H1 (cell line): ENCODE measurements at regions of chr1 and their contacts with region 1.

Region 1: DNA sequence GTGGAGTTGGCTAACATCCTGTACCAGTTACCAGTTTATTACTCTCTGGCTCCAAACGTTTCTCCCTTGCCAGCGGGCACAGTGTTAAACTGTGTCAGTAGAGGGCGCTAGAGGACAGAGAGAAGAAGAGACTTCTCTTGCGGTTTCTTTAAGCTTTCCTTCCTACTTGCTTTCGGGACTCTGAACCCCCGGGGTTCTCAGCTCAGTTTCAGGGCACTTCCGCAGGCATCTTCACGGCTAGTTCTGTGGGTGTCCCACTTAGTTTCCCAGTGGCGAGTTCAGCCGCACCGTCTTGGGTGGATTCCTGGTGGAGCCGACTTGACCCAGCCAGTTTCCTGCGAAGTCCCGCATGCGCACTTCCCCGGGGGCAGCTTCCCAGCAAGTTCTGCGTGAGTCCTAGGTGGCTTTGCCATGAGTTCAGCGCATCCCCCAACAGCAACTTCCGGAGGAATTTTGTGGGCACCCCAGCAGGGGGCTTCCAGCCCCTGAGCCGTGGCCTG is 37.9 kb upstream of the BTG2 start:
- DNase-seq: peak; percentile 50 to 89
- H3K4me3 ChIP-seq: peak overlapping the region; percentile 50 to 70 (median 56)
- H3K27ac ChIP-seq: no peak overlapping the region
- H3K4me1 ChIP-seq: peaks cover 0 to 3% (median 1%) of the 10 kb centered on the region in 4 experiments; a peak in 2 of 7 replicates
- H3K27me3 ChIP-seq: peaks cover 0 to 4% (median 2%) of the 10 kb centered on the region in 4 experiments; a peak in 4 of 7 replicates
- CTCF ChIP-seq: peak; percentile 42 to 90 (median 87)
- EP300 ChIP-seq: no peak
- POLR2A ChIP-seq: no peak
- RAD21 ChIP-seq: peak; percentile 75 to 85

Region 2: GRCh38 chr1:203038891-203039608 is 228.3 kb before region 1 on chr1:
- CTCF ChIA-PET with region 1: interaction called, 204 read pairs
- POLR2A ChIA-PET with region 1: interaction called, 7 read pairs
- DNase-seq: peak in 1 of 2 experiments; percentile 86
- H3K4me3 ChIP-seq: no peak overlapping the region
- H3K27ac ChIP-seq: no peak overlapping the region
- H3K4me1 ChIP-seq: peaks cover 2 to 15% (median 5%) of the 10 kb centered on the region in 4 experiments
- H3K27me3 ChIP-seq: no peaks in the 10 kb centered on the region
- CTCF ChIP-seq: peak; percentile 87 to 97 (median 88)
- EP300 ChIP-seq: no peak
- POLR2A ChIP-seq: no peak
- RAD21 ChIP-seq: peak; percentile 88 to 94

Region 3: GRCh38 chr1:203101915-203102634 is 165.3 kb before region 1 on chr1:
- CTCF ChIA-PET with region 1: interaction called, 12 read pairs
- POLR2A ChIA-PET with region 1: no interaction called
- DNase-seq: no peak
- H3K4me3 ChIP-seq: no peak overlapping the region
- H3K27ac ChIP-seq: no peak overlapping the region
- H3K4me1 ChIP-seq: no peaks in the 10 kb centered on the region
- H3K27me3 ChIP-seq: peaks cover 0 to 4% (median 0%) of the 10 kb centered on the region in 4 experiments; a peak in 1 of 7 replicates
- CTCF ChIP-seq: no peak
- EP300 ChIP-seq: no peak
- POLR2A ChIP-seq: no peak
- RAD21 ChIP-seq: no peak

Region 4: DNA sequence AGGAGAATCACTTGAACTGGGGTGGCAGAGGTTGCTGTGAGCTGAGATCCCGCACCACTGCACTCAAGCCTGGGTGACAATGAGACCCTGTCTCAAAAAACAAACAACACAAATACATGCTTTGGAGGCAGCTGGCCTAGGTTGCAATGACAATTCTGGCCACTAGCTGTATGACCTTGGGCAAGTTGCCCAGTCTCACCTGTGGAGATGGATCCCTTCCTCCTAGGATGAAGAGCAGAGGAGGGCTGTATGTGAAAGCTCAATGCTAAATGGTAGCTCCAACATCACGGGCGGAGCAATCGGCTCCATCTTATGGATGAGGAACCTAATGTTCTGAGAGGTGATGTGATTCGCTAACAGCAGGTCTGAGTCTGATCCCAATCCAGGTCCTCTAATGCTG is 119.3 kb before region 1 on chr1:
- CTCF ChIA-PET with region 1: interaction called, 16 read pairs
- POLR2A ChIA-PET with region 1: no interaction called
- DNase-seq: no peak
- H3K4me3 ChIP-seq: no peak overlapping the region
- H3K27ac ChIP-seq: no peak overlapping the region
- H3K4me1 ChIP-seq: peaks cover 7 to 43% (median 19%) of the 10 kb centered on the region in 4 experiments
- H3K27me3 ChIP-seq: no peaks in the 10 kb centered on the region
- CTCF ChIP-seq: peak; percentile 35 to 63 (median 52); a peak in 3 of 4 replicates
- EP300 ChIP-seq: no peak
- POLR2A ChIP-seq: no peak
- RAD21 ChIP-seq: no peak; a peak in 1 of 4 replicates

Region 5: DNA sequence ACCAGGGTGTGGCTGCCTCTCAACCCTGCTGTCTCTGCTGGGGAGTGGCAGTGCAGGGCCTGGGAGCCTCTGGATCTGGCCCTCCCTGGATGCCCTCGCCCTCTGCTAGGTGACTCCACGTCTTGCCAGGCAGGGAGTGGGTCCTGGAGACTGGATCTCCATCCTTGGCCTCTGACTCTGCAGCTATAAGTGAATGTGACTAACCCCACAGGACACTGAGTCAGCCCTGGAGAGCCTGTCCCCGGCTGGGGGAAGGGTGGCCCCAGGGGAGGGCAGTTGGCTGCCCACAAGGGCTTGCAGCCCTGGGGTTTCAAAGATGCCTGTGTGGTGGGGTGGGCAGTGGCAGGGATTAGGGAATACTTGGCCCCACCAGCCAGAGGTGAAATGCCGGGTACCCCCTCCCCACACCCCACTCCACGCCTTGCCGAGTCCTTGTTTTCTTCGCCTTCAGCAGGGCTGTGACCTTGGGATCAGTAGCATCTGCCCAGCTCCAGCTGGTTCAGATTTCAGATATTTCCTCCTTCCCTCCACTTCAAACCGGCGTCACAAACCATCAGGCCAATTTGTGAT is 89.8 kb before region 1 on chr1:
- CTCF ChIA-PET with region 1: interaction called, 31 read pairs
- POLR2A ChIA-PET with region 1: no interaction called
- DNase-seq: no peak
- H3K4me3 ChIP-seq: no peak overlapping the region
- H3K27ac ChIP-seq: no peak overlapping the region
- H3K4me1 ChIP-seq: peaks cover 0 to 7% (median 3%) of the 10 kb centered on the region in 4 experiments; a peak in 4 of 7 replicates
- H3K27me3 ChIP-seq: no peaks in the 10 kb centered on the region
- CTCF ChIP-seq: no peak
- EP300 ChIP-seq: no peak
- POLR2A ChIP-seq: no peak
- RAD21 ChIP-seq: no peak

Region 6: GRCh38 chr1:203252678-203253077 is 14.7 kb before region 1 on chr1:
- CTCF ChIA-PET with region 1: interaction called, 24 read pairs
- POLR2A ChIA-PET with region 1: no interaction called
- DNase-seq: no peak
- H3K4me3 ChIP-seq: no peak overlapping the region
- H3K27ac ChIP-seq: no peak overlapping the region
- H3K4me1 ChIP-seq: no peaks in the 10 kb centered on the region
- H3K27me3 ChIP-seq: no peaks in the 10 kb centered on the region
- CTCF ChIP-seq: no peak
- EP300 ChIP-seq: no peak
- POLR2A ChIP-seq: no peak
- RAD21 ChIP-seq: no peak